ENCODE measurements at regions of chr15 and their contacts with region 1.

Region 1: GRCh38 chr15:90716976-90717821 is at the start of gene BLM:
- DNase-seq: peak; percentile 97
- H3K4me3 Mint-ChIP-seq: peak within 1 kb of the TSS; percentile 90
- H3K27ac Mint-ChIP-seq: peak within 1 kb of the TSS; percentile 96
- H3K4me1 Mint-ChIP-seq: peaks cover 38% of the 10 kb centered on the region
- H3K27me3 Mint-ChIP-seq: no peaks in the 10 kb centered on the region
- total RNA-seq, gene BLM: 64.3 and 65.1 TPM in 2 replicates

Region 2: GRCh38 chr15:90233376-90234095 is 483.7 kb before region 1 on chr15 and contains the start of gene CIB1:
- intact Hi-C with region 1: loop called (anchors 1 kb)
- DNase-seq: peak; percentile 98
- H3K4me3 Mint-ChIP-seq: peak within 1 kb of the TSS; percentile 93
- H3K27ac Mint-ChIP-seq: peak within 1 kb of the TSS; percentile 94
- H3K4me1 Mint-ChIP-seq: peaks cover 57% of the 10 kb centered on the region
- H3K27me3 Mint-ChIP-seq: no peaks in the 10 kb centered on the region
- total RNA-seq, gene CIB1: 144 and 145 TPM in 2 replicates

Region 3: DNA sequence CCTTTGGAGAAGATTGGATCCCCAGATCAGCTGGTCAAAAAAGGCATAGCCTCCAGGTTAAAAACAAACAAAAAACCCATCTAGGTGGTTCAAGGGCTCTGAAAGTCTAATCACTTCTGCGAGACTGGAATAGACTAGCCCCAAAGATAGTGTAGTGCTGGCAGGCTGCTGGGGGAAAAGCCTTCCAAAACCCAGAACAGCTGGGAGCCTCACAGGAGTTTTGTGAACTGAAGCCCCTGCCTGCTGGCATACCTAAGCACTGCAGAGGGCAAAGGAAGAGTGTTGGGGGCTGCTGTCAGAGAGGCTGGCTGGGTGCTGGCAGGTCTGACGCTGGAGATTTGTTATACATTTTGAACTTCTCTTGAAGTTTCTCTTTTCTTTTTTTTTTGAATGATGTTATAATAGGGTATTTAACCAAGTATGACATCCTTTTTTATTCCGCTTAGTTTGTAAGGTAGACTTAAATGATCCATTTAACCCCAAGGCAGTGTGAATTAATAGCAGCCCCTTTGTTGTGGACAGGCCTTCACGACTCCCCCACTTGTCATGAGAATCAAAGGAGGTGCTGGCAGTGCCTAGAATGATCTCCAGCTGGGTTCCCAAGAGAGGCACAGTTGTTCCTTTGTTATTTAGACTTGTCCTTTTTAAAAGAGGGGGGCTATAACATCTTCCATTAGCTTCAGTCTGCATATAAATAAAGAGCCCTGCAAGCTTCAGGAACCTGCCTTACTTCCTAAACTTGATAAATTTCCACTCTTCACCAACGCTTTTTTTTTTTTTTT is 133.5 kb before region 1 on chr15:
- intact Hi-C with region 1: no loop called
- DNase-seq: no peak
- H3K4me3 Mint-ChIP-seq: peak overlapping the region; percentile 8
- H3K27ac Mint-ChIP-seq: peak overlapping the region; percentile 61
- H3K4me1 Mint-ChIP-seq: peaks cover 59% of the 10 kb centered on the region
- H3K27me3 Mint-ChIP-seq: no peaks in the 10 kb centered on the region

Region 4: GRCh38 chr15:90642464-90643300 is 74.5 kb before region 1 on chr15:
- intact Hi-C with region 1: no loop called
- DNase-seq: no peak
- H3K4me3 Mint-ChIP-seq: no peak overlapping the region
- H3K27ac Mint-ChIP-seq: peak overlapping the region; percentile 40
- H3K4me1 Mint-ChIP-seq: peaks cover 12% of the 10 kb centered on the region
- H3K27me3 Mint-ChIP-seq: no peaks in the 10 kb centered on the region

Region 5: GRCh38 chr15:90660195-90660998 is 56.8 kb before region 1 on chr15:
- intact Hi-C with region 1: loop called (anchors 1 kb)
- DNase-seq: peak; percentile 71
- H3K4me3 Mint-ChIP-seq: peak overlapping the region; percentile 77
- H3K27ac Mint-ChIP-seq: peak overlapping the region; percentile 96
- H3K4me1 Mint-ChIP-seq: peaks cover 81% of the 10 kb centered on the region
- H3K27me3 Mint-ChIP-seq: peaks cover 1% of the 10 kb centered on the region

Region 6: DNA sequence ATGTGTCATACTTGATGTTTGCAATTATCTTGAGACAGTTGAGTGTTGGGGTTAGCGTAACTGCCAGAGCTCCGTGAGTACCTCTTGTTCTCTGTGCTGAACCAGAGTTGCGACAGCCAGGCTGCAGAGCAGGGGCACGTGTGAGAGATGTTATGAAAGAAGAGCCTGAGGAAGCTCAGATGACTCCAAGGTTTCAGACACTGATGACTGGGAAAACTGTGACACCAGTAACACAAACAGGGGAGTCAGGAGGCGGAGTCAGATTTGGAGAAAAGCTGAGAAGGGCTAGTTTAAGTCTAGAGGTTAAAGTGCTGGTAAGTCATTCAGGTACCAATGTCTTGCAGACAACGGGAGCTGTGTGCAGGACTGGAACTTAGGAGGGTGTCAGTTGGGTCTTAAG is 44.9 kb after region 1 on chr15:
- intact Hi-C with region 1: loop called (anchors 5 kb)
- DNase-seq: no peak
- H3K4me3 Mint-ChIP-seq: no peak overlapping the region
- H3K27ac Mint-ChIP-seq: peak overlapping the region; percentile 44
- H3K4me1 Mint-ChIP-seq: peaks cover 31% of the 10 kb centered on the region
- H3K27me3 Mint-ChIP-seq: no peaks in the 10 kb centered on the region

Region 7: DNA sequence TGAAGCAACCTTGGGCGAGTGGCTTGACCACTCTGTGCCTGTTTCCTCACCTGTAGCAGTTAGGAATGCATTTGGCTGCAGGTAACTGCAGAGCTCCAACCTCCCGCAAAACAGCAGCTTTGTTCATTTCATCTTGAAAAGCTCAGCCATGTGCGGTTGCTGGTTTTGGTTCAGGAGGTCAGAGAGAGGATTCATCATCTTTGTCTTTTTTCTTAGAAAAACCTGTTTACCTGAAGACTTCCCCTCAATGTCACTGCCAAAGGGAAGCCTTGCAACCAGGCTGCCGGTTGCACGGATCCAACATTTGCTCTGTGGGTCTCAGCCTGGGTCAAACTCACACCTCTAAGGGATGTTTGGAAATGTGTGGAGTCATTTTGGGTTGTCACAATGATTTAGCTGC is 134.7 kb after region 1 on chr15:
- intact Hi-C with region 1: loop called (anchors 1 kb)
- DNase-seq: no peak
- H3K4me3 Mint-ChIP-seq: peak overlapping the region; percentile 63
- H3K27ac Mint-ChIP-seq: peak overlapping the region; percentile 96
- H3K4me1 Mint-ChIP-seq: peaks cover 67% of the 10 kb centered on the region
- H3K27me3 Mint-ChIP-seq: peaks cover 1% of the 10 kb centered on the region